ENCODE measurements at regions of chr17 and their contacts with region 1.

Region 1: DNA sequence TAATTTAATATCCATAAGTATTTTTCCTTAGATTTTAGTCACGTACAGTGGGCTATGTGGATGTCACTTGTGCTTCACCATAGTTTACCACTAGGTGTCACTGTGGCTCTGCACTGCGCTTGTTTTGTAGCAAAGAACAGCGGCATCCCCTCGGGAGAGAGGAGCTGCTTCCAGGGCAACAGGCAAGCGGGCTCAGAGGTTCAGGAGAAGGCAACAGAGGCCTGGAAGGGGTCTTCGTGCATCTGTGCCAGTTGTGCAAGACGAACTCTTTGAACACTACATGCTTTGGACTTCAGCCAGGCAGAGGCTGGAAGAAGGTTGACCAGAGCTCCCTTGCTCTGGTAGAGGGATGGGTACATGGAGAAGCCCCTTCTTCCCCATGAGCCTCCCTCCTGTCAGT is 20.6 kb downstream of the CYB561 start:
- DNase-seq: peak; percentile 16
- H3K4me3 ChIP-seq: no peak overlapping the region
- H3K27me3 ChIP-seq: no peaks in the 10 kb centered on the region
- CTCF ChIP-seq: peak; percentile 90

Region 2: DNA sequence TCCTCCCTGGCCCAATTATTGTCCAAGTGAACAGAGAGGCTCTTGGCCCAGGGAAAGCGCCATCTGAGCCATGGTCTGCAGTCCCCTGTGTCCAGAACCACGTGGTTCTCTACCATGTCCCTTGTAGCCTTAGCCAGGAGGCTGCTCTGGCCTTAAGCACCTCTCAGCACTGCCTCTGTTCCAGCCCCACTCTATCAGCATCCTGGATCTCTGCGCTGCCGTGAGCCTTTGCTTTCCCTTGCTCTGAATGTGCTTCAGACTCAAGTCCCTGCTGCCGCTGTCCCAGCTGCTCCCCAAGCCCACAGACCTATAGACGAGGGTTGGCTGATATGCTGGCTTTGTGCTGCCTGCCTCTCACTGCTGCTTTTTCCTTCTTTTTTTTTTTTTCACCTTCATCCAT is 13.2 kb before region 1 on chr17:
- CTCF ChIA-PET with region 1: interaction called, 37 read pairs
- POLR2A ChIA-PET with region 1: no interaction called
- DNase-seq: no peak
- H3K4me3 ChIP-seq: no peak overlapping the region
- H3K27me3 ChIP-seq: no peaks in the 10 kb centered on the region
- CTCF ChIP-seq: no peak

Region 3: GRCh38 chr17:63571763-63572271 is 146.3 kb after region 1 on chr17:
- CTCF ChIA-PET with region 1: interaction called, 11 read pairs
- POLR2A ChIA-PET with region 1: no interaction called
- DNase-seq: peak; percentile 56
- H3K4me3 ChIP-seq: no peak overlapping the region
- H3K27me3 ChIP-seq: no peaks in the 10 kb centered on the region
- CTCF ChIP-seq: no peak

Region 4: DNA sequence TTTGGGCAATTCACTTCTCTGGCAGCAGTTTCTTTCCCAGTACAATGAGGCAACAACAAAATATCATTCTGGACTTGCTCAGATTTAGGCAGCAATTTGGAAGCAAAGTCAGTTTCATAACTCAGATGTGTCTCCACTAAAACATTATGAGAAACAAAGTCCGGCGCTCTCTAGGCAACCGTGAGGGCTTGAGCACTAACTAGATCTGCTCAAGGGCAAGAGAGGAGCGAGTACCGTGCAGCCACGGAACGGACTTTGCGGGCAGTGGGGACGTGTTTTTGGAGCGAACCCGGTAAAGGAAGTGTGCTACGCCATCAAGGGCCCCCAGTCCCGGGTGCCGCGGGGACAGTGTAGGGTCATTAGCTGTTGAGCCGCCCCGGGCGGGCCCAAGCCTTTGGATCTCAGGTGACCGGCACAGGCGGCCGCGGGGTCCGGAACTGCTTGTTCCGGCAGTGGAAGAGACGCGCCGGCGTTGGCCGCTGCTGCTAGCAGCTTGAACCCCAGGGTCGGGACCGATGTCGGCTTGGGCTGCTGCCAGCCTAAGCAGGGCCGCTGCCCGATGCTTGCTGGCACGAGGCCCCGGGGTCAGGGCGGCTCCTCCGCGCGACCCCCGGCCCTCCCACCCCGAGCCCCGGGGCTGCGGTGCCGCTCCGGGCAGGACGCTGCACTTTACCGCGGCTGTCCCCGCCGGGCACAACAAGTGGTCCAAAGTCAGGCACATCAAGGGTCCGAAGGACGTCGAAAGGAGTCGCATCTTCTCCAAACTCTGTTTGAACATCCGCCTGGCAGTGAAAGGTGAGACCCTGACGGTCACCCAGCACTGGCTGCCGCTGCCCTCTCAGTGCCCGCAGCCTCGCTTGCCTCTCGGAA is 175.3 kb after region 1 on chr17 and contains the start of gene TACO1:
- CTCF ChIA-PET with region 1: interaction called, 173 read pairs
- POLR2A ChIA-PET with region 1: no interaction called
- DNase-seq: no peak
- H3K4me3 ChIP-seq: peak within 1 kb of the TSS; percentile 96
- H3K27me3 ChIP-seq: no peaks in the 10 kb centered on the region
- CTCF ChIP-seq: no peak
- polyA plus RNA-seq, gene TACO1: 19.5 and 23.5 TPM in 2 replicates

Region 5: GRCh38 chr17:63611354-63611753 is 185.9 kb after region 1 on chr17:
- CTCF ChIA-PET with region 1: interaction called, 173 read pairs
- POLR2A ChIA-PET with region 1: no interaction called
- DNase-seq: no peak
- H3K4me3 ChIP-seq: no peak overlapping the region
- H3K27me3 ChIP-seq: no peaks in the 10 kb centered on the region
- CTCF ChIP-seq: no peak

Region 6: GRCh38 chr17:63621766-63622519 is 196.5 kb after region 1 on chr17 and contains the start of gene MAP3K3:
- CTCF ChIA-PET with region 1: interaction called, 16 read pairs
- POLR2A ChIA-PET with region 1: interaction called, 4 read pairs
- DNase-seq: peak; percentile 99
- H3K4me3 ChIP-seq: peak within 1 kb of the TSS; percentile 52
- H3K27me3 ChIP-seq: no peaks in the 10 kb centered on the region
- CTCF ChIP-seq: peak; percentile 27; the same call in 1 of the 2 replicates
- polyA plus RNA-seq, gene MAP3K3: 20.2 and 32.5 TPM in 2 replicates

Measured in BJ (cell line).